B cell (primary cell): ENCODE measurements at regions of chr10 and their contacts with region 1.

Region 1: DNA sequence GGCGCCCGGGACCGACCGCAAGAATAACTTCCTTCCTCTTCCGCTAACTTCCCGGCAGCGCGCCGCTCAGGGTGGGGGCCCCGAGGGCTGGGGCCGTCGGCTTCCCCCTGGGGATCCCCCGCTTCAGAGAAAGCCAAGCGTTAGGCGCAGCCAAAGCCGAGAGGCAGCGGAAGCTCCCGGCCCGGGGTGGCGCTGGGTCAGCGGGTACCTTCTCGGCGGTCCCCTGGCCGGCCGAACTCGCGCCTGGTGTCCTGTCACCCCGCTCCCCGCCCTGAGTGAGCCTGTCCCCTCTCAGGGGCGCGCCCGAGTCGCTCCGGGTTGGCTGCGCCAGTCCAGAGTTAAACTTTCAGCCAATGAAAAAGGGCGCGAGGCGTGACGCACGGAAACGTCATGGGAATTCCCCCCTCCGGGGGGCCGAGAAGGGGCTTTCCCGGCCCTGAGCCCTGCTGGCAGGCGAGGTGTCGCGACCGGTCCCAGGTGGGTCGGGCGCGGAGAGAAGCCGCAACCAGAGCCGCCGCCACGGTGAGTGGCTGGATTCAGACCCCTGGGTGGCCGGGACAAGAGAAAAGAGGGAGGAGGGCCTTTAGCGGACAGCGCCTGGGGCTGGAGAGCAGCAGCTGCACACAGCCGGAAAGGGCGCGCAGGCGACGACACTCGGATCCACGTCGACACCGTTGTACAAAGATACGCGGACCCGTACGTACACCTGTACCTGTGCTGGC is 1.3 kb upstream of the NFKB2 start:
- DNase-seq: peak; percentile 100
- ATAC-seq: peak; percentile 76
- H3K4me3 ChIP-seq: peak overlapping the region; percentile 86 to 100 (median 99)
- H3K4me3 Mint-ChIP-seq: peak overlapping the region; percentile 95
- H3K27ac ChIP-seq: peak overlapping the region; percentile 98 to 100
- H3K27ac Mint-ChIP-seq: peak overlapping the region; percentile 99
- H3K4me1 ChIP-seq: peaks cover 35 to 44% of the 10 kb centered on the region in 2 donors
- H3K4me1 Mint-ChIP-seq: peaks cover 41% of the 10 kb centered on the region
- H3K27me3 ChIP-seq: no peaks in the 10 kb centered on the region
- H3K27me3 Mint-ChIP-seq: no peaks in the 10 kb centered on the region
- CTCF ChIP-seq: peak; percentile 38

Region 2: DNA sequence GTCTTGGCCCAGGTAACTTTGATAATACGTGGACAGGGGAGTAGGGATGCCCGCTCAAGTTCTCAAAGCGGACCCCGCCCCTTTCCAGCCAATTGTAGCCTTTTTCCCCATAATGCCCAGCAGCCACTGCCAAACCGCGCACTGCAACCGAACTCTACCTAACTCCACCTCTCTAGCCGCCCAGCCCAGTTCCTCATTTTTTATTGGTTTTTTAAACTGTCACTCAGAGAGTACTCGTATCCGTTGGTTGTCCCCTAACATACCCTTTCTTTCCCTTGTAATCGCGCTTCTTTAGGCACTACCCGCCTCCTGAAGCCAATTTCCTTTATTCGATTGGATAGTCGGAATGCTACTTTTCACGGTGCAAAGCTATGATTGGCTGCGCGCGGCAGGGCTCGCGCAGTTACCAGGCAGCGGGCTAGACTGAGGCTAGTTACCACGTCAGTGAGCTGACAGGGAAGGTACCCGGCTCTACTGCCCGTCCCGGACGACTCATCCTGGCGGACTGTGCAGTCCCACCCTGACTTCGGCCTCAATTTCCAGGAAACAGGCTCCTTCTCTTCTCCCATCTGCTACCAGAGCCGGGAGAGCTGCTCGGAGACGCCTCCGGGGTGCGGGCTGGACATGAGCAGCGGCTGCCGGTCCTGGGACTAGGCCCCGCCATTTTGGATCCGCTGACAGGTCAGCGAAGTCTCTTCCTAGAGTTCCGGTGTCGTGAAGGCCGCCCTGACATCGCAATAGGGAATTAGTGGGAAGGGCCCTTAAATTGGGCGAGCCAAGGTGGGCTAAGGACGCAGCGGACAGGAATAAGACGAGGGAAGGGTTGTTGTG is 148.9 kb before region 1 on chr10 and contains the start of gene GBF1:
- CTCF ChIA-PET with region 1: interaction called, 9 read pairs
- POLR2A ChIA-PET with region 1: interaction called, 16 read pairs
- intact Hi-C with region 1: loop called (anchors 1 kb)
- DNase-seq: peak; percentile 98
- ATAC-seq: peak; percentile 86
- H3K4me3 ChIP-seq: peak within 1 kb of the TSS; percentile 80 to 99 (median 98)
- H3K4me3 Mint-ChIP-seq: peak within 1 kb of the TSS; percentile 94
- H3K27ac ChIP-seq: peak within 1 kb of the TSS; percentile 86 to 90
- H3K27ac Mint-ChIP-seq: peak within 1 kb of the TSS; percentile 38
- H3K4me1 ChIP-seq: peaks cover 50 to 51% of the 10 kb centered on the region in 2 donors
- H3K4me1 Mint-ChIP-seq: peaks cover 56% of the 10 kb centered on the region
- H3K27me3 ChIP-seq: peaks cover 0 to 31% (median 27%) of the 10 kb centered on the region in 4 experiments
- H3K27me3 Mint-ChIP-seq: peaks cover 23% of the 10 kb centered on the region
- CTCF ChIP-seq: no peak
- total RNA-seq, gene GBF1: 39.3 and 41.2 TPM in 2 replicates

Region 3: GRCh38 chr10:102408728-102409603 is 14.7 kb after region 1 on chr10:
- CTCF ChIA-PET with region 1: interaction called, 35 read pairs
- POLR2A ChIA-PET with region 1: interaction called, 13 read pairs
- intact Hi-C with region 1: loop called (anchors 1 kb)
- DNase-seq: peak; percentile 64
- ATAC-seq: peak; percentile 49
- H3K4me3 ChIP-seq: peak overlapping the region in 3 of 5 experiments; percentile 8 to 40 (median 39)
- H3K4me3 Mint-ChIP-seq: peak overlapping the region; percentile 83
- H3K27ac ChIP-seq: no peak overlapping the region
- H3K27ac Mint-ChIP-seq: no peak overlapping the region
- H3K4me1 ChIP-seq: peaks cover 26 to 33% of the 10 kb centered on the region in 2 donors
- H3K4me1 Mint-ChIP-seq: peaks cover 31% of the 10 kb centered on the region
- H3K27me3 ChIP-seq: peaks cover 0 to 64% (median 35%) of the 10 kb centered on the region in 4 experiments
- H3K27me3 Mint-ChIP-seq: peaks cover 46% of the 10 kb centered on the region
- CTCF ChIP-seq: no peak

Region 4: DNA sequence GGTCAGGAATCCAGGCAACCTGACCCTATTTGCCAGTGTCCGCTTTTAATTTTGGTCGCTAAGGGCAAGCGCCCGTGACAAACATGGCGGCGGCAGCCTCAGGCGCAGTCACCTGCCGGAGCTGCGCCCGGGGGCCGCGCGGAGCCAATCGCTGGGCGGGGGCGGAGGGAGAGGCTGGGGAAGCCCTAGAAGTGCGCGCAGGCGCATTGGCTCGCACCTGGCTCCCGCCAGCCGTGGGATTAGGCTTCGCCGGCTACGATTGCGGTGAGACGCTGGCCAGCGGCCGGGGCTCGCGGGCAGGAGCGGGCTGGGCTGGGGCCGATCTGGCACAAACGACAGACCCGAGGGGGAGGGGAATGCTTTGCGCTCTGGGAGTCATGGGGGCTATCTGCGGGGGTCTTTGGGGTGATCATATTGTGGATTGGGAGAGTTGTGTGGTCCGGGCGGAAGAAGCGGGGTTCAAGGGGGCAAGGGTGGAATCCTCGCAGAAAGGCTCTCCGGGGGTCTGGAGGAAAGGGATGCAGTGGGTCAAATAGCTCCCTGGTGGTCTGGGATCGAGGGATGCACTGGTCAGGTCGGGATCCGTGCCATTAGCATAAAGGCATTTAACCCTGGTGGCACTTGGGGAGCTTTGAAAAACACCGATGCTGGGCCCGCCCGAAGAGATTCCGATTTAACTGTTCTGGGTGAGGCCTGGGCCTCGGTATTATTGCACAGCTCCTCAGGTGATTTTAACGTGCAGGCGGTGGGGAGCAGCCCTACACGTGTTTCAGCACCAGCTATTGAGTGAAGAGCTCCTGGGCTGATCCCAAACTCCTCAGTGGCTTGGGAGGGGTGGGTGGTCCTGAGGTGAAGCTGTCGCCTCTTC is 67.2 kb after region 1 on chr10:
- CTCF ChIA-PET with region 1: interaction called, 10 read pairs
- POLR2A ChIA-PET with region 1: interaction called, 10 read pairs
- intact Hi-C with region 1: loop called (anchors 1 kb)
- DNase-seq: peak; percentile 95
- ATAC-seq: peak; percentile 99
- H3K4me3 ChIP-seq: peak overlapping the region; percentile 34 to 76 (median 68)
- H3K4me3 Mint-ChIP-seq: peak overlapping the region; percentile 85
- H3K27ac ChIP-seq: peak overlapping the region; percentile 17 to 71
- H3K27ac Mint-ChIP-seq: peak overlapping the region; percentile 76
- H3K4me1 ChIP-seq: peaks cover 17 to 23% of the 10 kb centered on the region in 2 donors
- H3K4me1 Mint-ChIP-seq: peaks cover 29% of the 10 kb centered on the region
- H3K27me3 ChIP-seq: peaks cover 0 to 4% (median 0%) of the 10 kb centered on the region in 4 experiments
- H3K27me3 Mint-ChIP-seq: no peaks in the 10 kb centered on the region
- CTCF ChIP-seq: no peak

Region 5: DNA sequence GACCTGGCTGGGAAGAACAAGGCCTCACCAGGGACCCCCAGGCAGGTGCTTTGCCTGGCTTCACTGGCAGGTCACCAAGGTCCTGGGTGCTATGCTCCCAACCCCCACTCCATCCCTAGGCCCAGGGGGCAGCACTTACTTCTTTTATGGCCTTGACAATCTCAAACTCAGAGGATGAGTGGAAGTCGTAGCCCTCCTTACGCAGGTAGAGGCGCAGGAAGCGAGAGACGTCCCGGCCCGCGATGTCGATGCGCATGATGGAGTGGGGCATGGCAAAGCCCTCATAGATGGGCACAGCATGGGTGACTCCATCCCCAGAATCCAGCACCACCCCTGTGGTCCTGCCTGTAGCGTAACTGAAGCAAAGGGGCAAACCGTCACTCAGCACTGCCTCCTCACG is 89.8 kb after region 1 on chr10:
- CTCF ChIA-PET with region 1: interaction called, 25 read pairs
- POLR2A ChIA-PET with region 1: interaction called, 5 read pairs
- intact Hi-C with region 1: loop called (anchors 1 kb)
- DNase-seq: no peak
- ATAC-seq: no peak
- H3K4me3 ChIP-seq: no peak overlapping the region
- H3K4me3 Mint-ChIP-seq: no peak overlapping the region
- H3K27ac ChIP-seq: no peak overlapping the region
- H3K27ac Mint-ChIP-seq: no peak overlapping the region
- H3K4me1 ChIP-seq: peaks cover 0 to 3% of the 10 kb centered on the region in 2 donors
- H3K4me1 Mint-ChIP-seq: peaks cover 3% of the 10 kb centered on the region
- H3K27me3 ChIP-seq: no peaks in the 10 kb centered on the region
- H3K27me3 Mint-ChIP-seq: no peaks in the 10 kb centered on the region
- CTCF ChIP-seq: no peak

Region 6: GRCh38 chr10:102546606-102547320 is 152.5 kb after region 1 on chr10:
- CTCF ChIA-PET with region 1: no interaction called
- POLR2A ChIA-PET with region 1: no interaction called
- intact Hi-C with region 1: no loop called
- DNase-seq: no peak
- ATAC-seq: no peak
- H3K4me3 ChIP-seq: no peak overlapping the region
- H3K4me3 Mint-ChIP-seq: no peak overlapping the region
- H3K27ac ChIP-seq: no peak overlapping the region
- H3K27ac Mint-ChIP-seq: no peak overlapping the region
- H3K4me1 ChIP-seq: no peaks in the 10 kb centered on the region
- H3K4me1 Mint-ChIP-seq: peaks cover 7% of the 10 kb centered on the region
- H3K27me3 ChIP-seq: no peaks in the 10 kb centered on the region
- H3K27me3 Mint-ChIP-seq: no peaks in the 10 kb centered on the region
- CTCF ChIP-seq: no peak